ENCODE measurements at regions of chr19 and their contacts with region 1.

Region 1: DNA sequence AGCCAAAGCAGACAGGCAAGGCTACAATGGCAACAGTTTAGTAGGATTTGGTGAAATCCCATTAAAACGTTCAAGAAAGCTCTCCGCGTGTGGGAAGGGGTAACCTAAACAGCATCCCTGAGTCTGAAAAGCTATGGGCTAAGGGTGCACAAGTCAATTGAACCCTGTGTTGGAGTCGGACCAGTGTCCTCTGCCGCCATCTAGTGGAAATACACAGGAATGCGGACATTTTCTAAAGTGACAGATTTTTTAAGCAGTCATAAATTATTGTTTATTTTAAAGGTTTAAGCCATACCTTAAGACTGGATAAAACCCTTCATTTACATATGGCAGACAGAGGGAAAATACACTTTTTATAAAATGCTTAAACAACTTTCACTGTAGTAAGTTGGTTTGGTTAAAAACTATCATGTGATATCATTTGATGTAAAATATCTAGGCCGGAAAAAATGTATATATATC is 26.5 kb upstream of the LSM14A start:
- DNase-seq: no peak
- ATAC-seq: peak; percentile 66
- H3K4me3 ChIP-seq: no peak overlapping the region
- H3K27ac ChIP-seq: no peak overlapping the region
- H3K4me1 ChIP-seq: no peaks in the 10 kb centered on the region
- H3K27me3 ChIP-seq: no peaks in the 10 kb centered on the region

Region 2: DNA sequence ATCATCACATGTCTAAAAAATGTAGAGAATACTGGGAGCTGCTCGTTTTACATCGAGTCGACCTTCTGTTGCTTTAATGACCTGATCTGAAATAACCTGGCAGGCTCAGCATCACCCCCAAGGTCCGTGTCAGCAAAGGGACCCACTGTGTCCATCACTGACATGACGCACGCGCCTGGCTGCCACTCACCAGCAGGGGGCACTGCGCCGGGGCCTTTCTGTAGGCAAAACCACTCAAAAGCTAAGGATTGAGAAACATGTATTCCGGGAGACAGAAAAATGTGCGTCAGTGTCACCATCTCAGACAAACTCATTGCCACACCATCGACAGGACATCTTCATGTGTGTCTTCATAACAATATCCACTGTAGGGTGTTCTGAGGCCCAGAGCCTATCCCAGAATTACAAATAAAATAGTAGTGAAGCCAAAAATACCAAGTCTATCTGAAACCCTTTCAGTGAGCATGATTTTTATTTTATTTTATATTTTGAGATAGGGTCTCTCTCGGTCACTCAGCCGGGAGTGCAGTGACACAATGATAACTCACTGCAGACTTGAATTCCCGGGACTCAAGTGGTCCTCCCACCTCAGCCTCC is 103.7 kb before region 1 on chr19:
- intact Hi-C with region 1: loop called (anchors 5 to 10 kb)
- DNase-seq: peak; percentile 73 to 88
- ATAC-seq: peak; percentile 62
- H3K4me3 ChIP-seq: no peak overlapping the region
- H3K27ac ChIP-seq: no peak overlapping the region
- H3K4me1 ChIP-seq: no peaks in the 10 kb centered on the region
- H3K27me3 ChIP-seq: no peaks in the 10 kb centered on the region

Region 3: DNA sequence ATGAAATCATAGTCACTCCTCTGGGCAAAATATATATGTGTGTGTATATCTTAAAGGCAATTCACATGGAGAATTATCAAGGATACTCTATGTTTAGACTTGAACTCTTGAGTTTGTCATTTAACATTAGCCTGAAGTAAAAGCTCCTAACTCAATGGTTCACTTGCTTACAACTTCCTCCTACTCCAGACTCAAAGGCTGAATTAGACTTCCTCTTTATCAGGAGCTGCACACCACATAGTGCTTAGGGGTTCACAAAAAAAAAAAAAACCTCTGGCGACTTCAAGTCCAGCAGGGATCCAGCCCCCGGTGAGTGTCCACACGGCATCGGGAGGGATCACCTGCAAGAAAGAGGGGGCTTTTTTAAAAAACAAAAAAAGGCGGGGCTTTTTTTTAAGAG is 41.7 kb before region 1 on chr19:
- intact Hi-C with region 1: no loop called
- DNase-seq: no peak
- ATAC-seq: no peak
- H3K4me3 ChIP-seq: no peak overlapping the region
- H3K27ac ChIP-seq: no peak overlapping the region
- H3K4me1 ChIP-seq: no peaks in the 10 kb centered on the region
- H3K27me3 ChIP-seq: no peaks in the 10 kb centered on the region

Region 4: GRCh38 chr19:34120846-34121639 is 24.7 kb before region 1 on chr19:
- intact Hi-C with region 1: loop called in 1 of 2 experiments (anchors 1 kb)
- DNase-seq: no peak
- ATAC-seq: no peak
- H3K4me3 ChIP-seq: no peak overlapping the region
- H3K27ac ChIP-seq: no peak overlapping the region
- H3K4me1 ChIP-seq: no peaks in the 10 kb centered on the region
- H3K27me3 ChIP-seq: no peaks in the 10 kb centered on the region

Region 5: DNA sequence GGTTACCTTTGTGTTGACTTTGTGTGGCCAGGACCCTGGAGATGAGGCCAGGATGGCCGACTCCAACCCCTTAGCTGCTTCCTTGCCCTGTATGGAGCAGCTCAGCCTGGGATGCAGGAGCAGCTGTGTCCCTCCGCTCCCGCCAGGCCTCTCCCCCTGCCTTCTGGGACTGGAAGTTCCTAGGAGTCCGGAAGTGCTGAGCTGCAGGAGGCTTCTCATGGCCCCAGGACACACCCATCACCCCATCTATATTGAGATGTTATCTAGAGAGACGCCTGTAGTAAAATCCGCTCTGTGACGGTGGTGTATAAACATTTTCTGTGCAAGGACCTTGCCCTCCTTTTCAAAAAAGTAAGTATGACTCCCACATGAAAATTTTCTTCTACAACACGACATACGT is 362.8 kb after region 1 on chr19:
- intact Hi-C with region 1: no loop called
- DNase-seq: no peak
- ATAC-seq: no peak
- H3K4me3 ChIP-seq: no peak overlapping the region
- H3K27ac ChIP-seq: no peak overlapping the region
- H3K4me1 ChIP-seq: no peaks in the 10 kb centered on the region
- H3K27me3 ChIP-seq: no peaks in the 10 kb centered on the region